ENCODE measurements at regions of chr3 and their contacts with region 1.

Region 1: DNA sequence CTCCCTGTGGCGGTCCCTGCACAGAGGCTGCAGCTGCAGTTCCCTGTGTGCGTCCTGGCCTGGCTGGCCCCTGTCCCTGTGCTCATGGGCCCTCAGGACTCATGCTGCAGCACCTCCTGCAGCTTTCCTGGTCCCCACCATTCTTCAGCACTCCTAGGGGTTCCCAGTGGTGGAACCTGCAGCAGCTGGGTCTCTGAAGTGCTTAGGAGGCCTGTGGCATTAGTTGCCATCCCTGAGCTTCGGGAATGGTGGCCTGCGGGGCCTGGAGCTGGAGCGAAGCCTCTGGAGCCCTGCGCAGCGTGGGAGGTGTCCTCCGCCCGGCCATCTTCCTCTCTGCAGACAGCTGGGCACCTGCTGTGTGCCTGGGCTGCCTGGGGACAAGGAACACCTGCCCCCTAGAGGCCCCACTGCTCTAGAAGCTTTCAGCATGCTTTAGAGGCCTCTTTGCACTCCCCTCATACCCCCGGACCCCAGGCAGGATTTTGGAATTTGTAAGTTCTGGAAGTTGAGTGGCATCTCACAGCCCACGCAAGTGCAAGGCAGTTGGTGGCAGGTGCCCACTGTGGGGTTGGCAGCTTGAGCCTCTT is 13.1 kb downstream of the PLXNA1 start:
- DNase-seq: no peak
- ATAC-seq: no peak
- H3K4me3 ChIP-seq: no peak overlapping the region
- H3K27ac ChIP-seq: no peak overlapping the region
- H3K4me1 ChIP-seq: peaks cover 11 to 93% (median 50%) of the 10 kb centered on the region in 12 donors
- H3K27me3 ChIP-seq: no peaks in the 10 kb centered on the region
- CTCF ChIP-seq: peak in 2 of 12 donors; percentile 14 to 18
- POLR2A ChIP-seq: no peak

Region 2: DNA sequence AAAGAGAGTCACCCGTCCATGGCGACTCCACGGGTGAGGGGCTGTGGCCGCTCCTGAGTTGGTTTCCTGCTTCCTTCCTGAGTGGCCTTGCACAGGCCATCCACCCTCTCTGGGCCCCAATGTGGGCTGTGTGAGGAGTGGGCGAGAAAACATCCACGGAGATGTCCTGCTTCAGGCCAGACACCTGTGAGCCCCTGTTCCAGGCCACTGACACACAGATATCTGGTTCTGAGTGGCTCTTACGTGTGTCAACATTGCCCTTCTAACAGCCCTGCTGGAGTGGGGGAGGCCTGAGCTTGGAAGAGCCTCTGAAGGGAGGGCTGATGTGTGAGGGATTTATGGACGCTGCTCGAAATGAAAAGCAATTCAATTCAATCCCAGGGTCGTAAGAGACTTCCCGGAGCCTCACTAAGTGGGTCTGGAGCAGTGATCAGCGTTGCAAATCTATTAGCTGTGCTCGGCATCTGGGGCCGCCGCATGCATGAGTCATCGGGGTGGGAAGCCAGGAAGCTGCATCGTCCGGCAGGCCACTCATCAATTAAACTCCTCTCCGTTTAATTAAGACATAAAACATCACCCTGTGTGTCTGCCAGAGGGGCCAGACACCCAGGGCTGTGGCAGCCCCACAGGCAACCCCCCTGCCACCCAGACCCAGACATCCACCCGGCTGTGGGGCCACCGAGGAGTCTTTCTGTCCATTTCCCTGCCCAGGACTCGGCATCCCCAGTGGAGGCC is 176.9 kb after region 1 on chr3:
- intact Hi-C with region 1: loop called in 5 of 10 experiments (anchors 5 to 10 kb)
- DNase-seq: no peak
- ATAC-seq: no peak
- H3K4me3 ChIP-seq: no peak overlapping the region
- H3K27ac ChIP-seq: no peak overlapping the region
- H3K4me1 ChIP-seq: peaks cover 0 to 7% (median 0%) of the 10 kb centered on the region in 12 donors
- H3K27me3 ChIP-seq: peaks cover 0 to 17% (median 0%) of the 10 kb centered on the region in 9 donors
- CTCF ChIP-seq: no peak
- POLR2A ChIP-seq: no peak

Measured in heart left ventricle (tissue), 16 donors.